A549 (cell line): ENCODE measurements at regions of chr17 and their contacts with region 1.

Region 1: GRCh38 chr17:3012926-3013581 is 50.4 kb downstream of the OR1D5 start:
- DNase-seq: peak; percentile 86 to 88
- ATAC-seq: peak; percentile 93 to 97
- H3K4me3 ChIP-seq: no peak overlapping the region
- H3K27ac ChIP-seq: peak overlapping the region; percentile 37 to 58
- H3K4me1 ChIP-seq: 0 out of 3 replicates have a peak, but pooled peaks cover 4% of the 10 kb centered on the region
- CTCF ChIP-seq: peak; percentile 95
- EP300 ChIP-seq: no peak
- POLR2A ChIP-seq: no peak
- RAD21 ChIP-seq: peak; percentile 99

Region 2: DNA sequence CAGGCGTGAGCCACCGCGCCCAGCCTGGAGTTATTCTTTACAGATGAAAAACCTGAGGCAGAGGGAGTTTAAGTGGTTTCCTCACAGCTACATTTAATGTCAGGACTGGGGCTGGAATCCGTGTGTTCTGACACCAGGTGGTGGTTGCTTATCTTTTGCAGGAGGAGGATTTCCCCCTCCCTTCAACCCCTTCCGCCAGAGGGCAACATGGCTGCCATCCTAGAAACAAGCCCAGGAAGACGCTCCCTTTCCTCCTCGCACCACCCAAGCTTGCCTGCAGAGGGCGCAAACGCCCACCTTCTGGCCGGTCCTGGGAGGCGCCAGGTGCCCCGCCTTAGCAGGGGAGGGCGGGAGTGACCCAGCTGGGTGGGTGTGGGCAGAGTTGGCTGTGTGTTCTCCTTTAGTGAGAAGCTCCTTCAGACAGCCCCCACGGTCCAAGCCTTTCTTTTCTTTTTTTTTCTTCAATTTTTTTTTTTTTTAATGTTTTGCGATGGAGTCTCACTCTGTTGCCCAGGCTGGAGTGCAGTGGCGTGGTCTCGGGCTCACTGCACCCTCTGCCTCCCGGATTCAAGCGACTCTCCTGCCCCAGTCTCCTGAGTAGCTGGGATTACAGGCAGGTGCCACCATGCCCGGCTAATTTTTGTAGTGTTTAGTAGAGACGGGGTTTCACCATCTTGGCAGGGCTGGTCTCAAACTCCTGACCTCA is 226.7 kb before region 1 on chr17:
- CTCF ChIA-PET with region 1: interaction called, 35 read pairs
- POLR2A ChIA-PET with region 1: no interaction called
- DNase-seq: peak; percentile 94 to 95
- ATAC-seq: peak; percentile 89 to 97
- H3K4me3 ChIP-seq: peak overlapping the region; percentile 27
- H3K27ac ChIP-seq: peak overlapping the region; percentile 53; a peak in 4 of 6 replicates
- H3K4me1 ChIP-seq: no peaks in the 10 kb centered on the region
- CTCF ChIP-seq: peak; percentile 92
- EP300 ChIP-seq: no peak
- POLR2A ChIP-seq: no peak
- RAD21 ChIP-seq: peak; percentile 90 to 94

Region 3: GRCh38 chr17:2828397-2829038 is 184.5 kb before region 1 on chr17:
- CTCF ChIA-PET with region 1: interaction called, 299 read pairs
- POLR2A ChIA-PET with region 1: no interaction called
- DNase-seq: peak; percentile 82 to 91
- ATAC-seq: peak; percentile 95 to 97
- H3K4me3 ChIP-seq: no peak overlapping the region
- H3K27ac ChIP-seq: peak overlapping the region; percentile 60 to 70
- H3K4me1 ChIP-seq: peaks cover 7% of the 10 kb centered on the region
- CTCF ChIP-seq: peak; percentile 98
- EP300 ChIP-seq: no peak
- POLR2A ChIP-seq: no peak
- RAD21 ChIP-seq: peak; percentile 99

Region 4: GRCh38 chr17:2892305-2892971 is 120.6 kb before region 1 on chr17:
- CTCF ChIA-PET with region 1: interaction called, 13 read pairs
- POLR2A ChIA-PET with region 1: no interaction called
- DNase-seq: peak; percentile 94 to 97
- ATAC-seq: peak; percentile 95 to 98
- H3K4me3 ChIP-seq: no peak overlapping the region
- H3K27ac ChIP-seq: peak overlapping the region; percentile 50 to 68; a peak in 5 of 6 replicates
- H3K4me1 ChIP-seq: peaks cover 41% of the 10 kb centered on the region
- CTCF ChIP-seq: no peak
- EP300 ChIP-seq: no peak
- POLR2A ChIP-seq: no peak
- RAD21 ChIP-seq: no peak

Region 5: DNA sequence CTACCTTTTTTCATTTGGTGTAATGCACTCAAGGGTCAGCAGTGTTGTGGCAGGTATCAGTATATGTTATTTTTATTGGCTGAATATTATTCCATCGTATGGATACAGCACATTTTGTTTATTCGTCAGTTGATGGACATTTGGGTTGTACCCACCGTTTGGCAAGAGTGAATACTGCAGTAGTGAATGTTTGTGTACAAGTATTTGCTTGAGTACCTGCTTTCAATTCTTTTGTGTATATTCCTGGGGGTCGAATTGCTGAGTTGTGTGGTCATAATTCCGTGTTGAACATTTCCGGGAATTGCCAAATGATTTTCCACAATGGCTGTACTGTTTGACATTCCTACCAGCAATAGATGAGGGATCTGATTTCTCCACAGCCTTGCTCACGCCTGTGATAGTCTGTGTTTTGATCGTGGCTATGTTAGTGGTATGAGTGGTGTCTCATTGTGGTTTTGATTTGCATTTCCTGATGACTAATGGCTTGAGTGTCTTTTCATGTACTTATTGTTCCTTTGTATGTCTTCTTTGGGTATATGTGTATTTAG is 58.1 kb before region 1 on chr17:
- CTCF ChIA-PET with region 1: interaction called, 22 read pairs
- POLR2A ChIA-PET with region 1: no interaction called
- DNase-seq: peak; percentile 90 to 98
- ATAC-seq: peak; percentile 86
- H3K4me3 ChIP-seq: no peak overlapping the region
- H3K27ac ChIP-seq: peak overlapping the region; percentile 83 to 91
- H3K4me1 ChIP-seq: peaks cover 73% of the 10 kb centered on the region
- CTCF ChIP-seq: no peak
- EP300 ChIP-seq: peak; percentile 96; a peak in 4 of 5 replicates
- POLR2A ChIP-seq: no peak
- RAD21 ChIP-seq: peak in 1 of 2 experiments; percentile 60; a peak in 3 of 5 replicates

Region 6: DNA sequence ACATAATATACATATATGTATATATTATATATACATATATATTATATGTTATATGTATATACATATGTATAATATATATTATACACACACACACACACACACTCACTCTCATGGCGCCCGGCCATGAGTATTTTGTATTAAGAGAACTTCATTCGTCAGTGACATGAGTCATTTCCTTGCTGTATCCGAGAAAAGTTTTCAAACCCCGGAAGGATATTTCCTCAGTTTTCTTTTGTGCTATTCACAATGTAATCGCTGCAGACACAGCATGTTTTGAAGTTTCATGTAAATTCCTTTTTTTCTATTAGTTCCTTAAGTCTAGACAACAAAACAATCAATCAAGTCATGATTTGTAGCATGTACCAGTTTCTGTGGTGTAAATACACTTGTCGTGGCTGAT is 17.0 kb after region 1 on chr17:
- CTCF ChIA-PET with region 1: interaction called, 17 read pairs
- POLR2A ChIA-PET with region 1: no interaction called
- DNase-seq: no peak
- ATAC-seq: no peak
- H3K4me3 ChIP-seq: no peak overlapping the region
- H3K27ac ChIP-seq: no peak overlapping the region
- H3K4me1 ChIP-seq: no peaks in the 10 kb centered on the region
- CTCF ChIP-seq: no peak
- EP300 ChIP-seq: no peak
- POLR2A ChIP-seq: no peak
- RAD21 ChIP-seq: no peak